CD4-positive, alpha-beta T cell (primary cell): ENCODE measurements at regions of chr19 and their contacts with region 1.

Region 1: GRCh38 chr19:18594096-18594823 is 5.7 kb downstream of the REX1BD start:
- DNase-seq: peak; percentile 59 to 91 (median 70)
- ATAC-seq: peak; percentile 74
- H3K4me3 ChIP-seq: peak overlapping the region; percentile 52
- H3K4me3 Mint-ChIP-seq: peak overlapping the region; percentile 63
- H3K27ac ChIP-seq: no peak overlapping the region
- H3K27ac Mint-ChIP-seq: peak overlapping the region; percentile 42
- H3K4me1 ChIP-seq: peaks cover 40% of the 10 kb centered on the region
- H3K4me1 Mint-ChIP-seq: peaks cover 25% of the 10 kb centered on the region
- H3K27me3 ChIP-seq: peaks cover 3 to 8% of the 10 kb centered on the region in 2 experiments
- H3K27me3 Mint-ChIP-seq: peaks cover 4% of the 10 kb centered on the region
- CTCF ChIP-seq: peak; percentile 73

Region 2: DNA sequence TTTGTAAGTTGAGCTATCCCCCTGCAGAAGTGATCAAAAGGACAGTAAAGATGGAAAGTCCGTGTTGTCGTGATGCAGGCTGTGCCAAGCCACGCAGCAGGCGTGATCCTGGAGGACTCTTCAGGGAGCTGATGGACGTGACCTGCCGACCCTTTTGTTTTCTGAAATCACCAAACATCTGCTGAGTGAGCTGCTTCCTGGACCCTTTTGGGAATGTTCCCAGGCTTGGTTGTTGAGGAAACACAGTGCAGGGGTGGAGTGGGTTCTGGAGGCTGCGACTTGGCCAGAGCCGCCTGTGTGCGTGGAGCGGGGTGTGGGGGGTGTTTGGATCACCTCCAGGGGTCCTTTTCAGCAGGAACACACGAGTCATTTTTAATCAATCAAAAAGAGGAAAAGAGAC is 1552.3 kb before region 1 on chr19:
- CTCF ChIA-PET with region 1: no interaction called
- POLR2A ChIA-PET with region 1: no interaction called
- intact Hi-C with region 1: no loop called
- DNase-seq: no peak
- ATAC-seq: no peak
- H3K4me3 ChIP-seq: no peak overlapping the region
- H3K4me3 Mint-ChIP-seq: no peak overlapping the region
- H3K27ac ChIP-seq: no peak overlapping the region
- H3K27ac Mint-ChIP-seq: no peak overlapping the region
- H3K4me1 ChIP-seq: no peaks in the 10 kb centered on the region
- H3K4me1 Mint-ChIP-seq: no peaks in the 10 kb centered on the region
- H3K27me3 ChIP-seq: no peaks in the 10 kb centered on the region
- H3K27me3 Mint-ChIP-seq: peaks cover 15% of the 10 kb centered on the region
- CTCF ChIP-seq: no peak

Region 3: DNA sequence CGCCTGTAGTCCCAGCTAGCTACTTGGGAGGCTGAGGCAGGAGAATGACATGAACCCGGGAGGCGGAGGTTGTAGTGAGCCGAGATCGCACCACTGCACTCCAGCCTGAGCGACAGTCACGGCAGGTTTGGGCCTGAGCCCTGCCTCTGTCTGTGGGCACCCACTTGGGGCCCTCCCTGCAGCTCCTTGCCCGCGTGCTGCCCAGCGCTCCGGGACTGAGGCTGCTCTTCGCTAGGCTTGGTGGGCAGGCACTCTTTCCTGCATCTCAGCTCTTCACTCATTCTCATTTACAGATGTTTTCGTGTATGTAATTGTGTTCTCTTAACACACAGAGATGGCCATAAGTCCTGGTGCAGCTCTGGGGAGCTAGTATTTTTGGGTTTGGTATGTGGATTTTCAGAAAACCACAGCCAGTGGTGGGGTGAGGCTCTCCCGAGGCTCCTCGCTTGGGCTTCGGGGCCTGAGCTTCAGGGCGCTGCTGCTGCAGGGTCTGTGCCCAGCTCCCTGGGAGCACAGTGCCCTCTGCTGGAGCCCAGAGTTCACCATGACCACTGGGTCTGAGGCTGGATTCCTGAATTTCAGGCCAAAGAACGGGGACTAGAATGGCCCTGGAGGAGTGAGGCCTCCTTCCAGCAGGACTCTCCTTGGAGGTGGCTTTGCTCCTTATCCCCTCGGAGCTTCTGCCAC is 252.7 kb after region 1 on chr19:
- CTCF ChIA-PET with region 1: interaction called, 8 read pairs
- POLR2A ChIA-PET with region 1: interaction called, 3 read pairs
- intact Hi-C with region 1: loop called (anchors 1 kb)
- DNase-seq: peak; percentile 45 to 82 (median 63)
- ATAC-seq: peak; percentile 71
- H3K4me3 ChIP-seq: no peak overlapping the region
- H3K4me3 Mint-ChIP-seq: peak overlapping the region; percentile 74
- H3K27ac ChIP-seq: no peak overlapping the region
- H3K27ac Mint-ChIP-seq: peak overlapping the region; percentile 68
- H3K4me1 ChIP-seq: peaks cover 75% of the 10 kb centered on the region
- H3K4me1 Mint-ChIP-seq: peaks cover 59% of the 10 kb centered on the region
- H3K27me3 ChIP-seq: no peaks in the 10 kb centered on the region
- H3K27me3 Mint-ChIP-seq: no peaks in the 10 kb centered on the region
- CTCF ChIP-seq: peak; percentile 69